Naive thymus-derived CD4-positive, alpha-beta T cell (primary cell): ENCODE measurements at regions of chr10 and their contacts with region 1.

Region 1: GRCh38 chr10:12448729-12449391 is 99.5 kb downstream of the CAMK1D start:
- DNase-seq: peak; percentile 33 to 90 (median 82)
- ATAC-seq: peak; percentile 95
- H3K4me3 ChIP-seq: peak overlapping the region; percentile 5
- H3K4me3 Mint-ChIP-seq: peak overlapping the region; percentile 65 to 80 (median 70)
- H3K27ac ChIP-seq: no peak overlapping the region
- H3K27ac Mint-ChIP-seq: peak overlapping the region; percentile 89 to 97 (median 93)
- H3K4me1 ChIP-seq: peaks cover 9 to 15% of the 10 kb centered on the region in 2 donors
- H3K4me1 Mint-ChIP-seq: peaks cover 17 to 69% (median 50%) of the 10 kb centered on the region in 7 donors
- H3K27me3 ChIP-seq: no peaks in the 10 kb centered on the region
- H3K27me3 Mint-ChIP-seq: peaks cover 0 to 45% (median 0%) of the 10 kb centered on the region in 5 donors

Region 2: GRCh38 chr10:11863353-11864109 is 585.3 kb before region 1 on chr10:
- CTCF ChIA-PET with region 1: no interaction called
- POLR2A ChIA-PET with region 1: no interaction called
- intact Hi-C with region 1: loop called in 1 of 2 experiments (anchors 5 kb)
- DNase-seq: peak in 8 of 9 donors; percentile 33 to 79 (median 54)
- ATAC-seq: peak; percentile 90
- H3K4me3 ChIP-seq: peak overlapping the region; percentile 33
- H3K4me3 Mint-ChIP-seq: peak overlapping the region; percentile 57 to 93 (median 76)
- H3K27ac ChIP-seq: peak overlapping the region; percentile 50
- H3K27ac Mint-ChIP-seq: peak overlapping the region; percentile 74 to 95 (median 89)
- H3K4me1 ChIP-seq: peaks cover 14% of the 10 kb centered on the region in 2 donors
- H3K4me1 Mint-ChIP-seq: peaks cover 11 to 42% (median 29%) of the 10 kb centered on the region in 7 donors
- H3K27me3 ChIP-seq: no peaks in the 10 kb centered on the region
- H3K27me3 Mint-ChIP-seq: peaks cover 0 to 78% (median 0%) of the 10 kb centered on the region in 5 donors

Region 3: DNA sequence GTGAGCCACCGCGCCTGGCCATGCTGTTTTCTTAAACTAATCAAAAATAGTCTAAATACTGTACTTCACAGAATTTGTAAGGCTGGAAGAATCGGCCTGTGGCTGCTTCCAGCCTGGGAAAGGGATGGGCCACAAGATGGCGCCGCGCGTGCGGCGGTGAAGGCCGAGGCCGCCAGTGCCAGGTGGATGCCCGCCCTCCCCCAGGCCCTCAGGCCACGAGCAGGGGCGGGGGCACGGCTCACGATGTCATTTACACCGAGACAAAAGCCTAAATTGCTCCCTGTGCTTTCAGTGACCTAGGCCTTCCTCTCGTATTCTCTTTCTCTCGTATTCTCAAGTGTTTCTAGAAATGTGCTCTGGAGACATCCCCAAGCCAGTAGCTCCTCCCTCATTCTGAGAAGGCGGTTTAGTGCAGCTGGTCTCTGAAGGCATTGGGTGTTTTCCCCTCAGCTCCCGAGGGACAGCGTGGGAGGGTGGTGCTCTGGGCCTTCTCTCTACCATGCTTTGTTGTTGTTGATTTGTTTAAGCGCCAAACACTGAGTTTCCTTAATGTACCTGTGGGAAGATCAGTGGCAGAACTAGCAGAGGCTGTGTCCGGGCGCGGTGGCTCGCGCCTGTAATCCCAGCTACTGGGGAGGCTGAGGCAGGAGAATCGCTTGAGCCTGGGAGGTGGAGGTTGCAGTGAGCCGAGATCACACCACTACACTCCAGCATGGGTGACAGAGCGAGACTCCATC is 184.5 kb before region 1 on chr10:
- CTCF ChIA-PET with region 1: no interaction called
- POLR2A ChIA-PET with region 1: no interaction called
- intact Hi-C with region 1: loop called in 1 of 2 experiments (anchors 1 kb)
- DNase-seq: peak; percentile 45 to 75 (median 67)
- ATAC-seq: peak; percentile 73
- H3K4me3 ChIP-seq: peak overlapping the region; percentile 45
- H3K4me3 Mint-ChIP-seq: peak overlapping the region; percentile 58 to 81 (median 72)
- H3K27ac ChIP-seq: no peak overlapping the region
- H3K27ac Mint-ChIP-seq: peak overlapping the region in 7 of 9 donors; percentile 10 to 87 (median 51)
- H3K4me1 ChIP-seq: no peaks in the 10 kb centered on the region
- H3K4me1 Mint-ChIP-seq: peaks cover 0 to 26% (median 5%) of the 10 kb centered on the region in 7 donors
- H3K27me3 ChIP-seq: no peaks in the 10 kb centered on the region
- H3K27me3 Mint-ChIP-seq: no peaks in the 10 kb centered on the region

Region 4: DNA sequence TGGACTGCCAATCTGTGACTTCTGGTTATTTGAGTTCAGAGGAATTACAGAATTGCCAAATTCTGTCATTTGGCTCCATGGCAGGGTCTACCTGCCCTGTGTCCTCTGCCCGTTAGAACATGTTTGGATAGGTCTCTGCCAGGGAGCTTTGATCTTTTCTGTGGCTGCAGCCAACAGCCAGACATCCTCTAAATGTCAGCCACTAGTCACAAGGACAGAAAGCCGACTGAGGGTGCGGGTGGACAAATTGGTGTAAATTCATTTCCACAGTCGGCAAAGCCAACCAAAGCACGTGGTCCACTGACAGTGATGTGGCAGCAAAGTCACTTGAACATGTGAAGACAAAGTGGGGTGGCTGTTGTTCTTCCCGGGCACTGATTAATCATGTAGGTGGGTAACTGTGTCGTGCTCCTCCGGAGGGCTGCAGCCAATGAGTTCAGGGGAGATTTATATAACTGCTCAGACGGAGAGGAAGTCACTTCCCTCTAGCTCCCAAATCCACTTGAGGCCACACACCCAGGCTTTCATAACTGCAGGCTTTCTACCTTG is 126.2 kb before region 1 on chr10:
- CTCF ChIA-PET with region 1: no interaction called
- POLR2A ChIA-PET with region 1: no interaction called
- intact Hi-C with region 1: no loop called
- DNase-seq: no peak
- ATAC-seq: no peak
- H3K4me3 ChIP-seq: no peak overlapping the region
- H3K4me3 Mint-ChIP-seq: no peak overlapping the region
- H3K27ac ChIP-seq: no peak overlapping the region
- H3K27ac Mint-ChIP-seq: no peak overlapping the region
- H3K4me1 ChIP-seq: no peaks in the 10 kb centered on the region
- H3K4me1 Mint-ChIP-seq: peaks cover 0 to 7% (median 5%) of the 10 kb centered on the region in 7 donors
- H3K27me3 ChIP-seq: no peaks in the 10 kb centered on the region
- H3K27me3 Mint-ChIP-seq: no peaks in the 10 kb centered on the region

Region 5: GRCh38 chr10:12419262-12419847 is 29.5 kb before region 1 on chr10:
- CTCF ChIA-PET with region 1: no interaction called
- POLR2A ChIA-PET with region 1: no interaction called
- intact Hi-C with region 1: loop called in 1 of 2 experiments (anchors 2 kb)
- DNase-seq: peak in 3 of 9 donors; percentile 14 to 58 (median 21)
- ATAC-seq: peak; percentile 60
- H3K4me3 ChIP-seq: no peak overlapping the region
- H3K4me3 Mint-ChIP-seq: peak overlapping the region in 1 of 10 donors; percentile 12
- H3K27ac ChIP-seq: no peak overlapping the region
- H3K27ac Mint-ChIP-seq: peak overlapping the region in 4 of 9 donors; percentile 52 to 68 (median 61)
- H3K4me1 ChIP-seq: peaks cover 3 to 4% of the 10 kb centered on the region in 2 donors
- H3K4me1 Mint-ChIP-seq: peaks cover 11 to 69% (median 49%) of the 10 kb centered on the region in 7 donors
- H3K27me3 ChIP-seq: no peaks in the 10 kb centered on the region
- H3K27me3 Mint-ChIP-seq: no peaks in the 10 kb centered on the region

Region 6: GRCh38 chr10:12431151-12432101 is 17.4 kb before region 1 on chr10:
- CTCF ChIA-PET with region 1: no interaction called
- POLR2A ChIA-PET with region 1: no interaction called
- intact Hi-C with region 1: no loop called
- DNase-seq: no peak
- ATAC-seq: no peak
- H3K4me3 ChIP-seq: no peak overlapping the region
- H3K4me3 Mint-ChIP-seq: no peak overlapping the region
- H3K27ac ChIP-seq: no peak overlapping the region
- H3K27ac Mint-ChIP-seq: no peak overlapping the region
- H3K4me1 ChIP-seq: no peaks in the 10 kb centered on the region
- H3K4me1 Mint-ChIP-seq: peaks cover 0 to 46% (median 30%) of the 10 kb centered on the region in 7 donors
- H3K27me3 ChIP-seq: no peaks in the 10 kb centered on the region
- H3K27me3 Mint-ChIP-seq: peaks cover 0 to 7% (median 0%) of the 10 kb centered on the region in 5 donors

Region 7: DNA sequence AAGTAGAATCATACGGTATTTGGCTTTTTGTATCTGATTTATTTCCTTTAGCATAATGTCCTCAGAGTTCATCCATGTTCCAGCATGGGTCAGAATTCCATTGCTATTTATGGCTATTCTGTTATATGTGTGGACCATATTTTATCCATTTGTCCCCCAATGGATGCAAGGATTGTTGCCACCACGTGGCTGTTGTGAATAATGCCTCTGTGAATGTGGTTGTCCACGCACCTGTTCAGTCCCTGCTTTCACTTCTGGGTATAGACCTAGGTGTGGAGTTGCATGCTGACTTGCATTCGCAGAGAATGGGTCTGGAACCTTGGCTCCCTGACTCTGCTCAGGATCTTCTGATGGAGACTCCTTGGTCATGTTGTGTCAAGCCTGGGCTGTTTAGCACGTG is 100.4 kb after region 1 on chr10:
- CTCF ChIA-PET with region 1: no interaction called
- POLR2A ChIA-PET with region 1: no interaction called
- intact Hi-C with region 1: loop called in 1 of 2 experiments (anchors 5 kb)
- DNase-seq: no peak
- ATAC-seq: no peak
- H3K4me3 ChIP-seq: no peak overlapping the region
- H3K4me3 Mint-ChIP-seq: peak overlapping the region in 2 of 10 donors; percentile 17 to 45
- H3K27ac ChIP-seq: no peak overlapping the region
- H3K27ac Mint-ChIP-seq: peak overlapping the region in 6 of 9 donors; percentile 21 to 54 (median 39)
- H3K4me1 ChIP-seq: peaks cover 0 to 13% of the 10 kb centered on the region in 2 donors
- H3K4me1 Mint-ChIP-seq: peaks cover 21 to 54% (median 46%) of the 10 kb centered on the region in 7 donors
- H3K27me3 ChIP-seq: no peaks in the 10 kb centered on the region
- H3K27me3 Mint-ChIP-seq: no peaks in the 10 kb centered on the region

Region 8: DNA sequence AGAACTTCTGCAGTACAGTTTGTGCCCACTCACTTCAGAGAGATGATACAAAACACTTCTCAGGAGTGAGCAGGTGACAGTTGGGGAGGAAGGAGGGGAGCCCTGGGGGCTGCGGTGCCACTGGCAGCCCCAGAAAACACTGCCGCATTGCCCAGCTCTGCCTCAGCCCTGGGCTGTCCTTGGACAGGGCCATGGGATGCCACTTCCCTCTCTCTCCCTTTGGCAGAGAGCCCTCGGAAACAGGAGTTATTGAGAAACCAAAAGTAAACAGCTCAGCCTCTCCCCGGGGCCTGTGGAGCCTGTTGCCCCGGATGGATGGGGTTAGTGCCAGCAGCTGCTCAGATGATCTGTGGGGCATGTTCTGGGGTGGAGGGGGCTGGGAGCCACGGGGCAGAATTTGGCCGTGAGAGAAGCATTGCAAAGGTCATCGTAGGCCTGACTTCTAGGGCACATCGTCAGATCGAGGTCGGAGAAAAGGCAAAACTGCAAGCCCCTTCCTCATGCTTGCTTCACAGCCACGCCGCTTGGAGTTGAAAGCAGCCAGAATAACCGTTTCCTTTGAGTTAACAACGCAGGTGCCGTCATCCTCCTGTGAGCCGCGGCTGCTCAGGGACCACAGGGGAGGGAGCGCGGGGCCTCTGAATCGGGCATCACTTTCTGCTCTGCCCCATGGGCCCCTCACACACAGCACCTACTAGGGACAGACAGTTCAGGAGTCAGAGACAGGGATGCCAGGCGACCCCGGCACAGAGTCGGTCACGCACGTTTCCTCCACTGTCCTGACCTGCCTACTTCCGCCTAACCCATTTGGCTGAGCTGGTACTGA is 156.9 kb after region 1 on chr10:
- CTCF ChIA-PET with region 1: no interaction called
- POLR2A ChIA-PET with region 1: no interaction called
- intact Hi-C with region 1: loop called in 1 of 2 experiments (anchors 5 kb)
- DNase-seq: peak; percentile 45 to 80 (median 73)
- ATAC-seq: peak; percentile 87
- H3K4me3 ChIP-seq: peak overlapping the region; percentile 67
- H3K4me3 Mint-ChIP-seq: peak overlapping the region; percentile 78 to 94 (median 89)
- H3K27ac ChIP-seq: peak overlapping the region; percentile 81
- H3K27ac Mint-ChIP-seq: peak overlapping the region; percentile 93 to 100 (median 98)
- H3K4me1 ChIP-seq: peaks cover 9 to 14% of the 10 kb centered on the region in 2 donors
- H3K4me1 Mint-ChIP-seq: peaks cover 10 to 62% (median 41%) of the 10 kb centered on the region in 7 donors
- H3K27me3 ChIP-seq: no peaks in the 10 kb centered on the region
- H3K27me3 Mint-ChIP-seq: no peaks in the 10 kb centered on the region

Region 9: DNA sequence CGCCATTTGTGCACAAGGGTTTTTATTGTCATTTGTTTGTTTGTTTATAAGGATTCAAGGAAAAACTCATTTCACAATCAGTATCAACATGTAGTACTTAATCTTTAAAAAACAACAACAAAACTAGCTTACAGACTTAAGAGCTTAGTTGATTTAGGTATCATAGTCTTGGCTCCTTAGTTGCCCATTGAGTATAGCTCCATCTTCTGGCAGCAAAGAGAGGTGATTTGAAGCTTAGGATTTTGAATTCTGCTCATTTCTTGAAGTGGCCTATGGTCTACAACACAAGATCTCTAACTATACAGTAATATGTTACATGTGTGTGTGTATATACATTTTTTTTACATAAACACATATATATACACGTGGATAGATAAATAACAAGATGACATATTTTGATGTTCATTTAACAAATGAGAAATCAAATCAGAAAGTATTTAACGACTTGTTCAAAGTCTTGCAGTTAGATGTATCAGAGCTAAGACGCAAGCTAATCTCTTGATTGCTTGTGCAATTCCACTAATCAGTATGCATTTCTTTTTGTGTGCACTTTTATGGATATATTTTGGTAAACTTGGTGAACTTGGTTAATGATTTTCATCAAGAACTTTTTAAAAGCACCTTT is 207.8 kb after region 1 on chr10:
- CTCF ChIA-PET with region 1: interaction called, 3 read pairs
- POLR2A ChIA-PET with region 1: no interaction called
- intact Hi-C with region 1: loop called in 1 of 2 experiments (anchors 5 kb)
- DNase-seq: peak in 7 of 9 donors; percentile 25 to 73 (median 55)
- ATAC-seq: peak; percentile 86
- H3K4me3 ChIP-seq: no peak overlapping the region
- H3K4me3 Mint-ChIP-seq: peak overlapping the region in 1 of 10 donors; percentile 55
- H3K27ac ChIP-seq: no peak overlapping the region
- H3K27ac Mint-ChIP-seq: peak overlapping the region in 4 of 9 donors; percentile 29 to 68 (median 42)
- H3K4me1 ChIP-seq: no peaks in the 10 kb centered on the region
- H3K4me1 Mint-ChIP-seq: peaks cover 0 to 22% (median 4%) of the 10 kb centered on the region in 7 donors
- H3K27me3 ChIP-seq: no peaks in the 10 kb centered on the region
- H3K27me3 Mint-ChIP-seq: no peaks in the 10 kb centered on the region